Pancreas (tissue), 10 donors: ENCODE measurements at regions of chr9 and their contacts with region 1.

Region 1: DNA sequence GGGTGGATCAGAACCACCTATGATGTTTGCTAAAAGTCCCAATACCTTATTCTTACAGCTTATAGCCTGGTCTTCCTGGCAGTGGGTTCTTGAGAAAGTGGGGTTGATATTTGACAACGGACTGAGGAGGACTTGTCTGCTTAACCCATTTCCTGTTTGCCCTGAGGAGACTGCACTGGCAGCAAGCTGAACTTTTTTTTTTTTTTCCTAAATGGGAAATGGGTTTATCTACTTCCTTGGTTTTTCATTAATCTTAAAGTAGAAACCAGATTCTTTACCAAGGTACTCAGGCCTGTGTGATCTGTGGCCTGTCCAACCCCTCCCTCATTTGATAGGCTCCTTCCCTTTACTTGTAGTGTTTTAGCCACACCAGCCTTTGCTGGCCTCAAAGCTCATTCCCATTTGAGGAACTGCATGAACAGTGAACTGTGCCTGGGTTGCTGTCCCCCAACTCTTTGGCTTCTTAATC is 47.1 kb downstream of the C9orf57 start:
- DNase-seq: no peak
- ATAC-seq: no peak
- H3K4me3 ChIP-seq: no peak overlapping the region
- H3K27ac ChIP-seq: no peak overlapping the region
- H3K4me1 ChIP-seq: no peaks in the 10 kb centered on the region
- H3K27me3 ChIP-seq: no peaks in the 10 kb centered on the region
- CTCF ChIP-seq: no peak

Region 2: GRCh38 chr9:71806901-71807307 is 206.4 kb before region 1 on chr9:
- intact Hi-C with region 1: loop called in 1 of 3 experiments (anchors 10 kb)
- DNase-seq: peak; percentile 48 to 78 (median 68)
- ATAC-seq: peak; percentile 98 to 100 (median 100)
- H3K4me3 ChIP-seq: no peak overlapping the region
- H3K27ac ChIP-seq: peak overlapping the region in 1 of 4 donors; percentile 18
- H3K4me1 ChIP-seq: peaks cover 0 to 5% (median 0%) of the 10 kb centered on the region in 3 donors
- H3K27me3 ChIP-seq: no peaks in the 10 kb centered on the region
- CTCF ChIP-seq: peak; percentile 75 to 79 (median 78)